Heart left ventricle (tissue), 16 donors: ENCODE measurements at regions of chr1 and their contacts with region 1.

Region 1: DNA sequence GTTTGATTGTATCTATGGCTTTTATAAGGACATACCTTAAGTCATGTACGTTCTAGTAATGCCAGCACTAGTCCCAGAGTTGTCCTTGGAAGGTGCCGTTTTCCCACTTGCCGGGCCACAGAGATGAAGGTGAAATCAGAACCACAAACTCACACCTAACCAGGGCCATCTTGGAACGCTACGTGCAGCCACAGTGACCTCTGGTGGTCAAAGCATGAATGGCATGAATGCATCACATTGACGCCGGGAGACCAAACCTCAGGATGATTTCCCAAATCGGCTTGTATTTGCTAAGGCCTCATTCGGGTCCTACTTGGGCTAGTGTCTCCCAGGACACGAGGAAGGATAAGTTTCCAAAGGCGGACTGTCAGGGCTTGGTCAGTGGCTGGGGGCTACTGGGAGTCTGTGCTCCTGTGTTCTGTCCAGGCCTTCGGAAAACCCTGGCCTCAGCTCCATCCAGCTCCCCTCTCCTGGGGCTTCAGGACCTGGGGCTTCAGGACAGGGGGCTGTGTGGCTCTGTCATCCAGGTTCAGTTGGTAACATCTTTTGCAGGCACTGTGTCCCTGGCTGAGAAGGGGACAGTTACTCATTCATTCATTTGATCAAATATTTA is 260.5 kb downstream of the PRDM2 start:
- DNase-seq: peak; percentile 36 to 74 (median 60)
- ATAC-seq: peak in 3 of 4 donors; percentile 66 to 83 (median 77)
- H3K4me3 ChIP-seq: no peak overlapping the region
- H3K27ac ChIP-seq: no peak overlapping the region
- H3K4me1 ChIP-seq: no peaks in the 10 kb centered on the region
- H3K27me3 ChIP-seq: peaks cover 0 to 30% (median under 1%) of the 10 kb centered on the region in 9 donors
- CTCF ChIP-seq: peak; percentile 91 to 99 (median 96)
- POLR2A ChIP-seq: no peak

Region 2: DNA sequence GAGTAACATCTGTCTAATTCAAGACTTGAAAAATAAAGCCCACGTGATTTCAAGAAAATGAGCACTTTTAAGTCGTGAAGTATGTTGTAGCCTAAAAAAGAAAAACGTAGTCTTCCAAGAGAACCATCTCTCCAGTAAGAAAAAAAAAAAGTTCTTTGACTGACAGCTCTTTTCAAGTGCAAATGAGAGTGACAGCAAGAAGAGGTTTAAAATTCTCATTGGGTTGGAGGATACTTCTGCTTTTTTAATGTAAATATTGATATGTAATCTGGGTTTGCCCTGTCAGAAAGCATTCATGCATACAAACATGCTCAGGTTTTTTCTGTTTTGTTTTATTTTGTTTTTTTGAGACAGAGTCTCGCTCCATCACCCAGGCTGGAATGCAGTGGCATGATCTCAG is 292.8 kb before region 1 on chr1:
- intact Hi-C with region 1: loop called (anchors 1 to 2 kb)
- DNase-seq: no peak
- ATAC-seq: no peak
- H3K4me3 ChIP-seq: no peak overlapping the region
- H3K27ac ChIP-seq: no peak overlapping the region
- H3K4me1 ChIP-seq: peaks cover 0 to 7% (median 0%) of the 10 kb centered on the region in 12 donors
- H3K27me3 ChIP-seq: peaks cover 0 to 6% (median 0%) of the 10 kb centered on the region in 9 donors
- CTCF ChIP-seq: no peak
- POLR2A ChIP-seq: no peak

Region 3: GRCh38 chr1:13828454-13829151 is 131.9 kb before region 1 on chr1:
- intact Hi-C with region 1: loop called in 4 of 10 experiments (anchors 5 to 10 kb)
- DNase-seq: no peak
- ATAC-seq: peak in 2 of 4 donors; percentile 24 to 49
- H3K4me3 ChIP-seq: no peak overlapping the region
- H3K27ac ChIP-seq: no peak overlapping the region
- H3K4me1 ChIP-seq: peaks cover 0 to 3% (median 0%) of the 10 kb centered on the region in 12 donors
- H3K27me3 ChIP-seq: peaks cover 0 to 19% (median 0%) of the 10 kb centered on the region in 9 donors
- CTCF ChIP-seq: peak in 10 of 12 donors; percentile 18 to 53 (median 40)
- POLR2A ChIP-seq: no peak

Region 4: DNA sequence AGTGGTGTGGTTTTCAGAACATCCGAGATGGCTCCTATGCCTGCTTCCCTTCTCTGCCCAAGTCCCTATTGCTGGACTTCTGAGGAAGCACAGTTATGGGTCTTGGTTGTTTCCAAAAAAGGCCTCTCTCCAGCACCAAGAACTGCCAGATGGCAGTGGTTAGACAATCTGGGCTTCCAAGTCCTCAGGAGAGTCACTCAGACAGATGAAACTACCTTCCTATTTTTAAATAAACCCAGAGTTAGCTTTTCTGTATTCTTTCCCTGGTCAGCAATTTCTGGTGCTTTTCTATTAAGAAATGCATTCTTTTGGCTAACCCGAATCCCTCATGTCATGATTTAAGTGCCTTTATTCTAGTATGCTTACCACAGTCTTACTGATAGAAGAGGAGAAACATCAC is 14.6 kb before region 1 on chr1:
- intact Hi-C with region 1: no loop called
- DNase-seq: no peak
- ATAC-seq: no peak
- H3K4me3 ChIP-seq: no peak overlapping the region
- H3K27ac ChIP-seq: no peak overlapping the region
- H3K4me1 ChIP-seq: no peaks in the 10 kb centered on the region
- H3K27me3 ChIP-seq: peaks cover 0 to 6% (median 0%) of the 10 kb centered on the region in 9 donors
- CTCF ChIP-seq: no peak
- POLR2A ChIP-seq: no peak

Region 5: GRCh38 chr1:15100121-15100874 is 1139.8 kb after region 1 on chr1:
- intact Hi-C with region 1: loop called in 2 of 10 experiments (anchors 5 kb)
- DNase-seq: peak in 1 of 5 donors; percentile 42
- ATAC-seq: peak in 3 of 4 donors; percentile 52 to 70 (median 54)
- H3K4me3 ChIP-seq: no peak overlapping the region
- H3K27ac ChIP-seq: no peak overlapping the region
- H3K4me1 ChIP-seq: no peaks in the 10 kb centered on the region
- H3K27me3 ChIP-seq: peaks cover 0 to 36% (median 9%) of the 10 kb centered on the region in 9 donors
- CTCF ChIP-seq: peak; percentile 75 to 88 (median 83)
- POLR2A ChIP-seq: no peak